ENCODE measurements at regions of chr7 and their contacts with region 1.

Region 1: GRCh38 chr7:134605973-134606923 is 40.4 kb upstream of the BPGM start:
- DNase-seq: no peak
- ATAC-seq: peak; percentile 99
- H3K4me3 ChIP-seq: no peak overlapping the region
- H3K27ac ChIP-seq: no peak overlapping the region
- H3K4me1 ChIP-seq: no peaks in the 10 kb centered on the region
- H3K27me3 ChIP-seq: no peaks in the 10 kb centered on the region
- CTCF ChIP-seq: peak; percentile 86 to 91 (median 88)
- EP300 ChIP-seq: no peak
- POLR2A ChIP-seq: no peak
- RAD21 ChIP-seq: peak; percentile 92

Region 2: GRCh38 chr7:134298902-134299683 is 307.2 kb before region 1 on chr7:
- CTCF ChIA-PET with region 1: no interaction called
- POLR2A ChIA-PET with region 1: no interaction called
- RAD21 ChIA-PET with region 1: no interaction called
- SMC1A ChIA-PET with region 1: no interaction called
- in situ Hi-C with region 1: no loop called
- intact Hi-C with region 1: no loop called
- DNase-seq: no peak
- ATAC-seq: no peak
- H3K4me3 ChIP-seq: no peak overlapping the region
- H3K27ac ChIP-seq: no peak overlapping the region
- H3K4me1 ChIP-seq: no peaks in the 10 kb centered on the region
- H3K27me3 ChIP-seq: no peaks in the 10 kb centered on the region
- CTCF ChIP-seq: no peak
- EP300 ChIP-seq: no peak
- POLR2A ChIP-seq: no peak
- RAD21 ChIP-seq: no peak

Region 3: GRCh38 chr7:134547397-134548054 is 58.7 kb before region 1 on chr7:
- CTCF ChIA-PET with region 1: interaction called, 28 read pairs
- POLR2A ChIA-PET with region 1: no interaction called
- RAD21 ChIA-PET with region 1: interaction called, 4 read pairs
- SMC1A ChIA-PET with region 1: interaction called, 13 read pairs
- in situ Hi-C with region 1: no loop called
- intact Hi-C with region 1: loop called (anchors 2 kb)
- DNase-seq: peak; percentile 39
- ATAC-seq: peak; percentile 87
- H3K4me3 ChIP-seq: no peak overlapping the region; the same call in 1 of the 2 replicates
- H3K27ac ChIP-seq: no peak overlapping the region
- H3K4me1 ChIP-seq: peaks cover 21% of the 10 kb centered on the region
- H3K27me3 ChIP-seq: no peaks in the 10 kb centered on the region
- CTCF ChIP-seq: peak; percentile 72 to 87 (median 74)
- EP300 ChIP-seq: no peak
- POLR2A ChIP-seq: no peak
- RAD21 ChIP-seq: peak; percentile 34; the same call in 1 of the 2 replicates

Region 4: DNA sequence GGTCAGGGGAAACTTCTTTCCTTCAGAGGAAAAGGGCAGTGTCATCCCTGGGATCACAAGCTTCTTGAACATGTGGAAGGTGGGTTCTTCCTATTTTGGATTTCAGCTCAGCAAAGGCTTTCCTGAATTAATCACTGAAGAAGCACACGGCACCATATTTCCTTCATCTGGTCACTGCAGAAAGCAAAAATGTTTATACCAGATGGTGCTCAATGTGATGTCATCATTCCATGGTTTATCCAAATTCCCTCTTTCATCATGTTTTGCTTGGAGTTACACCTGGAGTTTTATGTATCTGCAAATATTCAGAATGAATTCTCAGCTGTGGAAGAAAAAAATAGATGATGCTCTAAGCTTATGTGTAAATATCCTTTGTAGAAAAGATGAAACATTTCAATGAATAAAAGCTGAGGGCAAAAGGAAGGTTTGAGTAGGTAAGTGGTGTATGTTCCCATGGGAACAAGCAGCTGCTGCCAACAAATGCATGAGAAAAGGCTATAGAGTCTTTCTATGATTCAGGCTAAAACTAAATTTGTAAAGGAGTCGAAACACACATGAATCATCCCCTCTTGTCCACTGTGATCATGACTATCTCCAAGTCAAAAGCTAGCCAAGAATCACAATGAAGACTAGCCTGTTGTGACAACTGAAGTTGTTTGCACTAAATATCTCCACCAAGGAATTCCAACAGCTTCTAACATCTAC is 13.5 kb after region 1 on chr7:
- CTCF ChIA-PET with region 1: interaction called, 19 read pairs
- POLR2A ChIA-PET with region 1: no interaction called
- RAD21 ChIA-PET with region 1: no interaction called
- SMC1A ChIA-PET with region 1: interaction called, 7 read pairs
- in situ Hi-C with region 1: no loop called
- intact Hi-C with region 1: no loop called
- DNase-seq: no peak
- ATAC-seq: no peak
- H3K4me3 ChIP-seq: no peak overlapping the region
- H3K27ac ChIP-seq: no peak overlapping the region
- H3K4me1 ChIP-seq: no peaks in the 10 kb centered on the region
- H3K27me3 ChIP-seq: peaks cover 0 to 3% of the 10 kb centered on the region in 2 experiments; a peak in 2 of 4 replicates
- CTCF ChIP-seq: no peak
- EP300 ChIP-seq: no peak
- POLR2A ChIP-seq: no peak
- RAD21 ChIP-seq: no peak

Region 5: DNA sequence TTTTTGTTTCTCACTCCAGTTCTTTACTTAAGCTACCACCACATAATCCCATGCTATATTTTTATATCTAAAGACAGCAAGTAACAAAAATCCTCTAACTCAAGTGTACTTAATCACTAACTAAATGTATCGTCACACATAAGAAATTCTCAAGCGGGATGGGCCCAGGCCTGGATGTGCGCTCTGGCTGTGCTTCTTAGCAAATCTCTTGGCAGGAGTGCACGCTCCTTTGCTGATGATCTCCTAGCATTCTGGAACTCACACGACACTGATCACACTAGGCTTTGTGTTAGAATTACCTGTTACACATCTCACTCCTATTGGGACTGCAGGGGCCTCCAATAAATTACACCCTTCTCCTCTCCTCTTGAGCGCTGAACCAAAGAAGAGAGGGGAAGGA is 126.5 kb after region 1 on chr7:
- CTCF ChIA-PET with region 1: no interaction called
- POLR2A ChIA-PET with region 1: no interaction called
- RAD21 ChIA-PET with region 1: no interaction called
- SMC1A ChIA-PET with region 1: no interaction called
- in situ Hi-C with region 1: no loop called
- intact Hi-C with region 1: no loop called
- DNase-seq: no peak
- ATAC-seq: no peak
- H3K4me3 ChIP-seq: no peak overlapping the region
- H3K27ac ChIP-seq: no peak overlapping the region
- H3K4me1 ChIP-seq: no peaks in the 10 kb centered on the region
- H3K27me3 ChIP-seq: no peaks in the 10 kb centered on the region
- CTCF ChIP-seq: no peak
- EP300 ChIP-seq: no peak
- POLR2A ChIP-seq: no peak
- RAD21 ChIP-seq: no peak

Measured in GM12878 (cell line).